Ascending aorta (tissue), 2 donors: ENCODE measurements at regions of chr7 and their contacts with region 1.

Region 1: DNA sequence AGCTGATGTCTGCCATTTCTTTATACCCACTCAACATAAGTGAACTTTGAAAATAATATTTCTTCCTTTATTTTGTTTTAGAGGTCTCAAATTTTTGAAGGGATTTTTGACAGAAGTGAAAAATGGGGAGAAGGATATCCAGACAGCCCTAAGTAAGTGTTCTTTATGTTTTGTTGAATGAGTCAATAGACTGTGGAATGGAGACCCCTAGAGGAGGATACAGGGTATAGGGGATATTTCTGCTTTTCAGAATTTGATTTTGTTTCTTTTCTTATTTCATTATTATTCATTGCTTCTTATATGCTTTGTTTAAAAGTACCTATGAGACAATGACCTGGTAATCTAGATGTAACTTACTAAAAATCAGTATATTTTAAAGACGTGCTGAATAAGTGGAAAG is 34.4 kb downstream of the PLEKHA8 start:
- DNase-seq: no peak
- H3K4me3 ChIP-seq: no peak overlapping the region
- H3K27ac ChIP-seq: no peak overlapping the region
- H3K4me1 ChIP-seq: no peaks in the 10 kb centered on the region
- H3K27me3 ChIP-seq: no peaks in the 10 kb centered on the region
- CTCF ChIP-seq: peak; percentile 22 to 52 (median 39)

Region 2: GRCh38 chr7:29878081-29878688 is 184.4 kb before region 1 on chr7:
- intact Hi-C with region 1: loop called (anchors 1 kb)
- DNase-seq: no peak
- H3K4me3 ChIP-seq: no peak overlapping the region
- H3K27ac ChIP-seq: no peak overlapping the region
- H3K4me1 ChIP-seq: no peaks in the 10 kb centered on the region
- H3K27me3 ChIP-seq: no peaks in the 10 kb centered on the region
- CTCF ChIP-seq: peak in 2 of 3 experiments; percentile 33 to 57

Region 3: DNA sequence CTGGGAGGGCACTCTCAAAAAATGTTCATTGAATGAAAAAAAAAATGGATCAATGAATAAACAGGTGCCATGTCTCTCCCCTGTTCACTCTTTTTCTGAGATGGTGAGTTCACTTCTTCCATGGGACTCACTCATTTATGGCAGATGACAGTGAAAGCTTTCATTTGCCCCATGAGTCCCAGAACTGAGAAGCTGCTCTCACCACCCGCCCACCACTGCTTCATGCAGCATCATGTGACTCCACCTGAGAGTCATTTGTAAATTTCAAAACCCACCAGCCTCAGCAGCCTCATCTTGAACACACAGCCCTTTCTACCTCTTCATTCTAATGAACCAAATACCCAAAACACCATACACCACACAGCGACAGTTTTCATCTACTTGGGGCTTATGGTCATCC is 137.9 kb before region 1 on chr7:
- intact Hi-C with region 1: no loop called
- DNase-seq: no peak
- H3K4me3 ChIP-seq: no peak overlapping the region
- H3K27ac ChIP-seq: no peak overlapping the region
- H3K4me1 ChIP-seq: no peaks in the 10 kb centered on the region
- H3K27me3 ChIP-seq: no peaks in the 10 kb centered on the region
- CTCF ChIP-seq: no peak

Region 4: DNA sequence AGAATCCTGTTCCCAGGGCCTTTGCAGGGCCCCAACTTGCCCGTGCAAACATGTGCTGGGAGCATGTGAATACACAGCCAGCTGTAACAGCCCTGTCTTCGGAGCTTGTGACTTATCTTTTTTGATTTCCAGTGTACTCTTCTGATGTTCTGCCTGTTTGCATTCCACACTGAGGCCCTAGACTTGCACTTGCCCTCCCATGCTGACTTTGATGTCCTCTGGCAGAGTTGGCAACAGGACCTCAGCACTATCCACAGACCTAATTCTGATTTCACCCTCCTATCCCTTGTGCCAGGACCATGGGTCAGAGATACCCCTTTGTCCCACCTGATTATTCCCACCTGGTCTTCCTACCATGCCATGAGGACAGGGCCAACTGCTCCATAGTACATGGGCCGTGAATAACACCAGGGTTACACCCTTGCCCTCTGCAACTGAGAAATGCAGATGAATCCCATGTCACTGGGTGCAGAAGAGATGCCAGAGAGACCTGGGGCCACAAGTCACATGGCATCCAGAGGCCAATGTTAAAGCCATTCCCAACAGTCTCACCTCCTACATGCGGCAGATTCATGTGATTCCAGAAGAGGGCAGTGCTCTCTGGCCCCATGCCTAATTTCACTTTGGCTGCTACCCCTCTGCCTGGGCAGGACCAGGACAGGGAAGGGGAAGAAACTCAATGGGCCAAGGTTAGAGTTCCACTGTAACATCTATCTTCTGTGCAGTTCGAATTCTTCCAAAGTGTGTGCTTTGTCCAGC is 116.0 kb before region 1 on chr7:
- intact Hi-C with region 1: loop called (anchors 2 kb)
- DNase-seq: no peak
- H3K4me3 ChIP-seq: no peak overlapping the region
- H3K27ac ChIP-seq: no peak overlapping the region
- H3K4me1 ChIP-seq: no peaks in the 10 kb centered on the region
- H3K27me3 ChIP-seq: no peaks in the 10 kb centered on the region
- CTCF ChIP-seq: peak in 2 of 3 experiments; percentile 16 to 53